ENCODE measurements at regions of chr1 and their contacts with region 1.

Region 1: GRCh38 chr1:53196485-53197270 is at the start of gene CPT2:
- DNase-seq: peak; percentile 92
- H3K4me3 Mint-ChIP-seq: peak within 1 kb of the TSS; percentile 95
- H3K27ac Mint-ChIP-seq: peak within 1 kb of the TSS; percentile 92
- H3K4me1 Mint-ChIP-seq: peaks cover 28% of the 10 kb centered on the region
- H3K27me3 Mint-ChIP-seq: no peaks in the 10 kb centered on the region
- total RNA-seq, gene CPT2: 18.5 and 19.4 TPM in 2 replicates

Region 2: GRCh38 chr1:52842643-52843309 is 353.9 kb before region 1 on chr1 and contains the start of gene ZYG11A:
- intact Hi-C with region 1: loop called (anchors 10 kb)
- DNase-seq: peak; percentile 75
- H3K4me3 Mint-ChIP-seq: peak within 1 kb of the TSS; percentile 77
- H3K27ac Mint-ChIP-seq: no peak within 1 kb of the TSS
- H3K4me1 Mint-ChIP-seq: peaks cover 8% of the 10 kb centered on the region
- H3K27me3 Mint-ChIP-seq: peaks cover 34% of the 10 kb centered on the region
- total RNA-seq, gene ZYG11A: 0.22 and 0.26 TPM in 2 replicates

Region 3: GRCh38 chr1:53014791-53015507 is 181.7 kb before region 1 on chr1:
- intact Hi-C with region 1: loop called (anchors 2 kb)
- DNase-seq: peak; percentile 78
- H3K4me3 Mint-ChIP-seq: peak overlapping the region; percentile 91
- H3K27ac Mint-ChIP-seq: peak overlapping the region; percentile 61
- H3K4me1 Mint-ChIP-seq: peaks cover 23% of the 10 kb centered on the region
- H3K27me3 Mint-ChIP-seq: no peaks in the 10 kb centered on the region

Region 4: DNA sequence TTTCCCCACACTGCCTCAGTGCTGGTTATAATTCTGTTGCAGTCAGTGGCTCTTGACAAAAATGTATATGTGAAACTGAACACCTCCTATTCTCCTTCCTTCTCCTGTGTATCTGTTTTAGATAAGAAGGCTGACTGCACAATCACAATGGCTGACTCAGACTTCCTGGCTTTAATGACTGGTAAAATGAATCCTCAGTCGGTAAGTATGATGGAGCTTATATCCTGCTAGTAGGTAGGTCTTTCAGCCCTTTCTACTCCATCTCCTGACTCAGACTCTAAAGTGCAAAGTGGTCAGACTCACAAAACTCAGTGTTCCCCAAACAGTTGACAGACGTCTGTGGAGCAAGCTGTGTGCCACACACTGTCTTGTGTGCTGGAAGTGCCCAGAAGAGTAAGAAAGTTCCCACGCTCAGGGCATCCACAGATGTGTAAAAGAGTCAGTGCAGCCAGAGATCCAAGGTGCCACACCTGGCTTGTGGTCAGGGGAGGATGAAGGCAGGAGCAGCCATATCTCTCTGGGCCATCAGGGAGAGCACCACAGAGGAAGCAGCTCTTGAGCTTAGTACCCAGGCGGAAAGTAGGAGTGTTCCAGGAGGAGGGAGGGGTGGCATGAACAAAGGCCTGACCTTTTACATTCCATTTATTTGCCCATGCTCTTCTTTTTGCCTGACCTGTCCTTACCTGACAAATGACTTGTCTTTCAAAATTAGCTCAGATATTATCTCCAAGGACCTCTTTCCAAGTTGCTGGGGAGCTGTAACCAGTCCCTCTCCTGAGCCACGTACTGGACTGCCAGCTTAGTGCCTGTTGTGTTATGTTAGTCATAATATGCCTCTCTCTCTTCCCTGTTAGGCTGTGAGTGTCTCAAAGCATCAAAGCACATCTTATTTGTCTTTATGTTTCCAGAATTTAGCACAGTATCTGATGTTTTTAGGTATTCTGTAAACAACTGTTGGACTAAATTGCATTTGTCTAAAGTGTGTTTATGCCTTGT is 148.6 kb before region 1 on chr1:
- intact Hi-C with region 1: no loop called
- DNase-seq: no peak
- H3K4me3 Mint-ChIP-seq: no peak overlapping the region
- H3K27ac Mint-ChIP-seq: peak overlapping the region; percentile 16
- H3K4me1 Mint-ChIP-seq: peaks cover 14% of the 10 kb centered on the region
- H3K27me3 Mint-ChIP-seq: no peaks in the 10 kb centered on the region

Region 5: GRCh38 chr1:53182111-53182593 is 14.5 kb before region 1 on chr1:
- intact Hi-C with region 1: no loop called
- DNase-seq: peak; percentile 63
- H3K4me3 Mint-ChIP-seq: no peak overlapping the region
- H3K27ac Mint-ChIP-seq: no peak overlapping the region
- H3K4me1 Mint-ChIP-seq: no peaks in the 10 kb centered on the region
- H3K27me3 Mint-ChIP-seq: peaks cover 8% of the 10 kb centered on the region

Region 6: DNA sequence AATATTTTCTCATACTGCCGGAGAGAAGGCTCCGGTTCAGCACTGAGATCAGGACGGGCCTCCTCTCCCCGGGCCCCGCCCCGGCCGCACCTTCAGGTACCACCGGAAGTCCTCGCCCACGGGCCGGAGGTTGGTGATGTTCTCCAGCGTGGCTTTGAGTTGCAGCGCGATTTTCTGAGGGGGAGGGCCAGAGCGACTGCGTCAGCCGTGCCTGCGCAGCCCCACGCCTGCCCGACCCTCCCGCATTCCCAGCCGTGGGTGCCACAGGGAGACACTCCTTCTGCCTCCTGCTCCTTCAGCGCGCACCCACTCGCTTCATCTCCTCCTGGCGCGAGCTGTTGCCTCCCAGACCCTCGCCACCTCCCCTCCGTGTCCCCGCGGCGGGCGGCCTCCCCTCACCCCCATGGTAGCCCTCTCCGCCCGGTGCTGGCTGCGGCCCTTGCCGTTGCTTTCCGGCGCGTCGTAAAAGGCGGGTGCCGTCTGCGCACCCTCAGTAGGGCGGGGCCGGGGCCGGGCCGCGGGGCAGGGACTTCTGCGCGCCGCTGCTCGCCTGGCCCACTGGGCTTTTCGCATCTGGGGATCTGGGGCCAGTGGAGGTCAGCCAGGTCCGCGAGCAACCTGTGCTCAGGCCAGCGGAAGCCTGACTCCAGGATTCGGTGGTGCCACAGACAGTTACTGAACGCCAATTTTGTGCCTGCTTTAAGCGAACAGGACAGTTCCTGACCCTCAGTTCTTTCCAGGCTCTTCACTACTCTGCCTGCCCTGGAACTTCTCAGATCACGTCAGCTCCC is 23.7 kb after region 1 on chr1 and contains the start of gene CZIB:
- intact Hi-C with region 1: loop called (anchors 1 kb)
- DNase-seq: peak; percentile 92
- H3K4me3 Mint-ChIP-seq: peak within 1 kb of the TSS; percentile 90
- H3K27ac Mint-ChIP-seq: peak within 1 kb of the TSS; percentile 97
- H3K4me1 Mint-ChIP-seq: peaks cover 30% of the 10 kb centered on the region
- H3K27me3 Mint-ChIP-seq: peaks cover 2% of the 10 kb centered on the region
- total RNA-seq, gene CZIB: 43.6 and 45.2 TPM in 2 replicates

Region 7: DNA sequence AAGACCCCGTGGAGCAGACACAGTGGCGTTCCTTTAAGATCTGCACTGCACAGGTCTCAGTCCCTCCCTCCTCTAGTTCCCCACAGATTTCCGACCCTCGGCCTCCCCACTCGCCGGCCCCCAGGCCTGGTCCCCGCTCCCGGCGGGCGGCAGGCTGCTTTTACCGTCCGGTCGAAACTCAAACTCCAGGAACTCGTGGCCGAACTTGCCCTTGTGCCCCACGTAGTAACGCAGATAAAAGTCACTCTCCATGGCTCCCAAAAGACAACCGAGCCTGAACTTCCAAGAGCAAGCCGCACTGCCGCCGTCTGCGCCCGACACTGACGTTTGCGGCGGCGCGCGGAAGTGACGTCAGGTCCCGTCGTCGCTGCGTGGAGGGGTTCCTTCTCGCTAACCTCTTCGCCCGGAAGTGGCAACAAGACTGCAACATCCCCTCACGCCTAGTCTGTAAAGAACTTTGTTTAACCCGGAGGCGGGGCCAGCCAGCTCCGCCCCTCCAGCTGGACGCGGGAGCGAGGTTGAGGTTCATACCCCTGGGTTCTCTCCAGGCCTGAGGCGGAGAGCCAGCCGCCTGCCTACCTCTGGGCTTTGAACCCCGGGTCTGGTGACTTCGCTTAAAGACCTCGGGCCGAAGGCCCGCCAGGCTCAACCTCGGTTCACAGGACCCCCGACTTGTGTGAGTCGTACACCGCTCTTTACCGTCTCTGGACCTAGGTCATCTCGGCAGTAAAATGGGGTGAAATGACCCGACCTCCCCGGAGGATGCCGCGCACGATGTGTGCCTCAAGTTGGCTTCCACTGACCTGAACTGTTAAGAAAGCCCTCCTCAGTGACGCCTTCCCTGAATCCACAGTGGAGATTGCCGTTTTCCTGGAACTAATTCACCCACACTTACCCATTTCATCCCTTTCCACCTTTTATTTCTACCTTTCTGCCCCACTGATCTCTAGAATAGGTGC is 41.8 kb after region 1 on chr1 and contains the start of gene MAGOH:
- intact Hi-C with region 1: loop called (anchors 1 kb)
- DNase-seq: peak; percentile 93
- H3K4me3 Mint-ChIP-seq: peak within 1 kb of the TSS; percentile 97
- H3K27ac Mint-ChIP-seq: peak within 1 kb of the TSS; percentile 98
- H3K4me1 Mint-ChIP-seq: peaks cover 28% of the 10 kb centered on the region
- H3K27me3 Mint-ChIP-seq: no peaks in the 10 kb centered on the region
- total RNA-seq, gene MAGOH: 104 TPM in 2 replicates

Measured in activated T-helper 1 cell treated with anti-CD3 and anti-CD28 coated beads, Interleukin-12 subunit alpha, Interleukin-12 subunit beta, Interleukin-2, Interleukin-4 antibody, amounts not matched to agents 30 ng/mL and 10 ng/mL and 1 ng/mL, durations not matched to agents 14 hours and 24 hours and 36 hours (primary cell).